PC-9 (cell line): ENCODE measurements at regions of chr6 and their contacts with region 1.

Region 1: GRCh38 chr6:89145787-89146646 is at the start of gene PM20D2:
- DNase-seq: peak in 1 of 2 experiments; percentile 76
- H3K4me3 ChIP-seq: peak within 1 kb of the TSS; percentile 80
- H3K27ac ChIP-seq: peak within 1 kb of the TSS; percentile 85
- H3K4me1 ChIP-seq: peaks cover 32% of the 10 kb centered on the region; the same call in 1 of the 2 replicates
- H3K27me3 ChIP-seq: no peaks in the 10 kb centered on the region
- CTCF ChIP-seq: no peak
- total RNA-seq, gene PM20D2: 21.9 and 28.8 TPM in 2 replicates

Region 2: GRCh38 chr6:89161326-89162046 is 15.5 kb after region 1 on chr6:
- CTCF ChIA-PET with region 1: no interaction called
- POLR2A ChIA-PET with region 1: no interaction called
- intact Hi-C with region 1: no loop called
- DNase-seq: no peak
- H3K4me3 ChIP-seq: no peak overlapping the region
- H3K27ac ChIP-seq: no peak overlapping the region
- H3K4me1 ChIP-seq: no peaks in the 10 kb centered on the region
- H3K27me3 ChIP-seq: no peaks in the 10 kb centered on the region
- CTCF ChIP-seq: no peak

Region 3: GRCh38 chr6:89297695-89298351 is 151.8 kb after region 1 on chr6:
- CTCF ChIA-PET with region 1: no interaction called
- POLR2A ChIA-PET with region 1: interaction called, 5 read pairs
- intact Hi-C with region 1: loop called (anchors 2 kb)
- DNase-seq: peak; percentile 87 to 96
- H3K4me3 ChIP-seq: peak overlapping the region; percentile 37; the same call in 1 of the 2 replicates
- H3K27ac ChIP-seq: peak overlapping the region; percentile 100
- H3K4me1 ChIP-seq: peaks cover 36% of the 10 kb centered on the region
- H3K27me3 ChIP-seq: no peaks in the 10 kb centered on the region
- CTCF ChIP-seq: no peak